Posterior vena cava (tissue), 2 donors: ENCODE measurements at regions of chr1 and their contacts with region 1.

Region 1: DNA sequence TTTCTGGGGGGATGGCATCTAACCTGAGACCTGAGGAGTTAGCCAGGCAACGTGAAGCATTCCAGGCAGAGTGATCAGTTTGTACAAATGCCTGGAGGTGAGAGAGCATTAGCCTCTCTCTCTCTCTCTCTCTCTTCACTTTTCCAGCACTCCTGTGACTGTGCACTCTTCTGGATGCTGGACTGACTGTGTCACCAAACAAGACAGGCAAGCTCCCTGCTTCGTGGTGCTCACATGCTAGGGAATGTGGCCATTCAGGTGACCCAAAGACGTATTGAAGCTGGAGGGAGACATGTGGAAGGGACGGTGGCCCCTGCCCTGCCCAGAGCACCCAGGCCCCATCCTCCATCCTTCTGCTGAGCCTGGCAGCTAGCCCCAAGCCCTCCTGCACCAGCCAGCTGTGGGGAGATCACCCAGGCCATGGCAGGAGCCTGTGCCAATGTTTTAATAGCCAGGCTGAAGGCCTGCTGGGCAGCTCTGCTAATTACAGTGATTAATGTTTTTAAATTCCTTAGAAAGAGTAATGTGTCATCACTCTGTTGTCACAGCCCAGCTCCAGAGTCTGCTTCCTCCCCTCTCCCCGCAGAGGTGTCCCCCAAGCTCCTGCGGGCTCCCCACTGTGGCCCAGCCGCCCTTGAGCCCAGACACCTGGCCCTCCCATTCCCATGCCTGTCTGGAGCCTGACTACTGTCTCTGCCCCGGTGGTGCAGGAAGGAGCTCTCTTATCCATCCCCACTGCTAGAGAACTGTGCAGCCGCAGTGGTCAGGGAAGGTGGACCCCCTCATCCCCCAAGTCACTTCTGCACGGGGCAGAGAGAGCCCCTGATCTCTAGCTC is 48.9 kb downstream of the UBIAD1 start:
- DNase-seq: no peak

Region 2: DNA sequence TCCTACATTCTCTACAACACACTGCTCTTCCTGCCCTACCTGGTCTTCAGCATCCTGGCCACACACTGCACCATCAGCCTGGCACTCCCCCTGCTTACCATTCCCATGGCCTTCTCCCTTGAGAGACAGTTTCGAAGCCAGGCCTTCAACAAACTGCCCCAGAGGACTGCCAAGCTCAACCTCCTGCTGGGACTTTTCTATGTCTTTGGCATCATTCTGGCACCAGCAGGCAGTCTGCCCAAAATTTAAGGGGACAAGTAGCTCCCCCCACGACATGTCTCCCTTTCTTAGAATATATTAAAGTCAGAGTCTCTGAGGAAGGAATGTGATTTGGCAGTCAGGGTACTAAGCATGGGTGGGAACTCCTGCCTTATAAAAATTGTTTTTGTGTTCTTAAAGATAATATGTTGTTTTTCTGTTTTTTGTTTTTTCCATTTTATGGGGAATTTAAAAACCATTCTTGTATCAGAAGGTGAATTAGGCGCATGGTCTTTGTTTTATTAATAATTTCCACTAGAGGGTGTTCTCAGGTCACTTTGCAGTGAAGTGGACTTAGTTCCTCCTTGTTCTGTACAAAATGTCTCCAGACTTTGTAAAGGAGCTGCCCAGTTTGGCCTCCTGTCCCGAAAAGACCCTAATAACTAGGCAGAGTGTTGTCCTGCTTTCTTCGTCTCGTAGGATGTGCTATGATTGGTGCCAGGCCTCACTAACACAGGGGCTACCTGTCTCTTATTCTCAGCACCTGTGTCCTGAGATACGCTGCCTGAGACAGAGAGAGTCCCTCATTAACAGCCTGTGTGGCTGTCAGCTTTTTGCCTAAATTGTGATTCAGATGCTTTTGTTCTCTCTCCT is 35.8 kb before region 1 on chr1:
- intact Hi-C with region 1: no loop called
- DNase-seq: no peak

Region 3: GRCh38 chr1:11365744-11366387 is 44.0 kb after region 1 on chr1:
- intact Hi-C with region 1: loop called in 1 of 2 experiments (anchors 1 kb)
- DNase-seq: no peak

Region 4: DNA sequence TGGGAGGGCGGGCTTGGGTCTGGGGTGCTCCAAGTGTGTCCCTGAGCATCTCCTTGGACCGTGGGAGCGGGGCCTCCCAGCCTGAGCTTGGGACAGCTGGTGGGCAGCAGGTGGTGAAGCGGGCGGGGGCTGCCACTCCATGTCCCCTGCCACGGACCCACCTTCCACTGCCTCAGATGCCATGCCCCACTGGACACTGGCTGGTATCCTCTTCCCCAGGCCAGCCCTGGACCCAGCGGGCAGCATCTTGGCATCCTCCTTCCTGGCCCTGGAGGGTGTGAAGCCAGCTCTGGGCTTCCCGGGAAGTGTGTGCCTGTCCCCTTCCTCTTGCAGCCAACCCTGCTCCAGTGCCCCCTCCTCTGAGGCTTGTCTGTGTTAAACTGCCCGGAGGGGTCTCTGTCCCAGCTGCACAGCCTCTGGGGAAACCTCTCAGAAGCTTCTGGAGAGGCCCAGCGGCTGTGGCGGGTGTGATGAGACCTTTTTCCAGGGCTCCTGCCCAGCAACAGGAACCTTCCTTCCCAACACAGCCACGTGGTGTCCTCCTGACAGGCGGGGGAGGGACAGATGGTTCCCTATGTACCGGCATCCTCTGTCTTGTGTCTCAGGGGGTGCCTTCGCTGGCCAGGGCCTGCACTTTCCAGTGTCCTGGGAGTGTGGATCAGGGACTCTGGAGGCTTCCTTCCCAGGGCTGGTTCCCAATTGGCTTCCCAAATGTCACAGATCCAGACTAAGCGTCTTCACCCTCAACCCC is 75.5 kb after region 1 on chr1:
- intact Hi-C with region 1: no loop called
- DNase-seq: peak; percentile 62

Region 5: GRCh38 chr1:11434506-11434905 is 112.6 kb after region 1 on chr1:
- intact Hi-C with region 1: no loop called
- DNase-seq: no peak